Activated CD4-positive, alpha-beta memory T cell treated with anti-CD3 and anti-CD28 coated beads, Interleukin-2, amount 10 ng/mL, durations not matched to agents 7 days and 5 days (primary cell): ENCODE measurements at regions of chr19 and their contacts with region 1.

Region 1: DNA sequence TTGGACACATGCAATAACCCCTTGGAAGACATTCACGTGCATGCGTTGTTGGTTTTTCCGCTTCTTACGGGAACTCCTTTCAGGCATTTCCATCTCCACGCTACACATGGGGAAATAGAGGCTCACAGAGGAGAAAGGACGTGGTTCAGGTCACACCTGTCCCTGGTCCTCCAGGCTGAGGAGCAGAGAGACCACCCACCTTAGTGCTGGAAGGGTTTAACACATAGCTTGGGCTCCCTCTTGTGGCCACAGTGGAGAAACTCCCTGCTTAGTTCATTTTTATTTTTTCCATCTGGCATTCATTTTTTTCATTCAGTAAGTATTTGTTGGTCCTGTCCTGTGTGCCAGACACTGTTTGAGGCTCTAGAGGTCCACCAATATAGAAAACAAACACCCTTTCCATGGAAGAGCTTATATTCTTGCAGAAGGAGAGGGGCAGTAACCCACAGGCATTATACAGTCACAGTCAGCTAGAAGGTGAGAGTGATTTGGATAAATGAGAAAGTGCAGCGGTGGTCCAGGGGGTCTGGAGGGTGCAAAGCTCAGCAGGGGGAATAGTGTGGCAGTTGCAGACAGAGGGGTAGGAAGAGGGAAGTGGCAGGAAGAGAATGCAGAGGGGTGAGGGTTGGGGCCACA is 24.2 kb upstream of the TTYH1 start:
- DNase-seq: peak; percentile 65
- H3K4me3 Mint-ChIP-seq: no peak overlapping the region
- H3K27ac Mint-ChIP-seq: no peak overlapping the region
- H3K4me1 Mint-ChIP-seq: peaks cover 38% of the 10 kb centered on the region
- H3K27me3 Mint-ChIP-seq: peaks cover 16% of the 10 kb centered on the region

Region 2: DNA sequence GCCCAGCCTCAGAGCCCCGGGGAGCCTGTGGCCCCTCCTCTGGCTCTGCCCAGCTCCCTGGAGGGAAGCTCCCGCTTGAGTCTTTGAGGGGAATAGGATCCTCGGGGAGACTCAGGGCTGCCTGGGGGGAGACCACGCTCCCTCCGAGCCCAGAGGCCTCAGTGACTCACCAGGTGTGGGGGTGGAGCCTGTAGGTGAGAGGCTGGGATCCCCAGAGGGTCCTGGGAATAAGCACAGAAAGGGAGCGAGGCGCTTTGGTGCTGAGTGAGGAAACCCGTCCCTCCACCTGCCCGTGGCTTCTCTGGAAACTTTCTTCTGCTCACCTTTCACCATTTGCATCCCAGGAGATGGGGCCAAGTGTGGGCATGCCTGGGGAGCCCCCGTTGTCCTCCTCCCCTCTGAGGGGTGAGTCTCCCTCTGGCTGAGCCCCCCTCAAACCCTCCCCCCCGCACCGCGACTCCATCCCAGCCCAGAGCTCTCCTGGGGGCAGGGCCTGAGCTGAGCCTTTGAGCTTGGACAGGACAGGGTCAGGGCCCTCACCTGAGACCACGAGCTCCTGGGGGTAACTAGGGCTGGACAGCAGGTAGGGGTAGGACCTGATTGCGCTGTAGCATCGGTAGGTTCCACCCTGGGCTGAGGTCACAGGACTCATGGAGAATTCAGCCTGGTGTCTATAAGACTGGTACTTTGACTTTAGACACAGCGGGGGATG is 136.7 kb before region 1 on chr19:
- CTCF ChIA-PET with region 1: no interaction called
- POLR2A ChIA-PET with region 1: no interaction called
- DNase-seq: no peak
- H3K4me3 Mint-ChIP-seq: no peak overlapping the region
- H3K27ac Mint-ChIP-seq: no peak overlapping the region
- H3K4me1 Mint-ChIP-seq: no peaks in the 10 kb centered on the region
- H3K27me3 Mint-ChIP-seq: peaks cover 20% of the 10 kb centered on the region

Region 3: GRCh38 chr19:54266133-54266532 is 124.9 kb before region 1 on chr19:
- CTCF ChIA-PET with region 1: interaction called, 11 read pairs
- POLR2A ChIA-PET with region 1: interaction called, 5 read pairs
- DNase-seq: peak; percentile 77
- H3K4me3 Mint-ChIP-seq: no peak overlapping the region
- H3K27ac Mint-ChIP-seq: no peak overlapping the region
- H3K4me1 Mint-ChIP-seq: no peaks in the 10 kb centered on the region
- H3K27me3 Mint-ChIP-seq: peaks cover 36% of the 10 kb centered on the region

Region 4: GRCh38 chr19:54325194-54325621 is 65.9 kb before region 1 on chr19:
- CTCF ChIA-PET with region 1: interaction called, 153 read pairs
- POLR2A ChIA-PET with region 1: interaction called, 3 read pairs
- DNase-seq: peak; percentile 42
- H3K4me3 Mint-ChIP-seq: no peak overlapping the region
- H3K27ac Mint-ChIP-seq: no peak overlapping the region
- H3K4me1 Mint-ChIP-seq: peaks cover 8% of the 10 kb centered on the region
- H3K27me3 Mint-ChIP-seq: peaks cover 30% of the 10 kb centered on the region

Region 5: DNA sequence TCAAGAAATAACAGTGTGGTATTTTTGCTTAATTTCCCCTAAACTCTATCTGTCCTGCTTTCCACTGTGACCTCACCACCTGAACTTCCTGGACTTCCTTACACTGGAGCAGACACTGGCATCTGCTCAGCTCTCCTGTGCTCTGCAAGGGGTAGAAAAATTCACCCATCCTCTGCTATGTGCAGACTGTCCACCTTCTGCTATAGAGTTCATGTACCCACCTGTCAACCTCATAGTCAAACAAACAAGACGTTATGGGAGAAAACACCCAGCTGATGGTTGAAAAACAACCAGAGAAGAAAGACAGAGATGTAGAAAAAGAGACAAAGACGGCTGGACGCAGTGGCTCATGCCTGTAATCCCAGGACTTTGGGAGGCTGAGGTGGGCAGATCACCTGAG is 38.5 kb before region 1 on chr19:
- CTCF ChIA-PET with region 1: interaction called, 62 read pairs
- POLR2A ChIA-PET with region 1: interaction called, 11 read pairs
- DNase-seq: no peak
- H3K4me3 Mint-ChIP-seq: no peak overlapping the region
- H3K27ac Mint-ChIP-seq: no peak overlapping the region
- H3K4me1 Mint-ChIP-seq: peaks cover 3% of the 10 kb centered on the region
- H3K27me3 Mint-ChIP-seq: peaks cover 28% of the 10 kb centered on the region

Region 6: GRCh38 chr19:54364775-54365257 is 26.2 kb before region 1 on chr19 and contains the start of gene LAIR1:
- CTCF ChIA-PET with region 1: interaction called, 11 read pairs
- POLR2A ChIA-PET with region 1: interaction called, 38 read pairs
- DNase-seq: peak; percentile 66
- H3K4me3 Mint-ChIP-seq: peak within 1 kb of the TSS; percentile 87
- H3K27ac Mint-ChIP-seq: peak within 1 kb of the TSS; percentile 82
- H3K4me1 Mint-ChIP-seq: peaks cover 72% of the 10 kb centered on the region
- H3K27me3 Mint-ChIP-seq: peaks cover 18% of the 10 kb centered on the region
- total RNA-seq, gene LAIR1: 56.6 to 59.0 TPM

Region 7: DNA sequence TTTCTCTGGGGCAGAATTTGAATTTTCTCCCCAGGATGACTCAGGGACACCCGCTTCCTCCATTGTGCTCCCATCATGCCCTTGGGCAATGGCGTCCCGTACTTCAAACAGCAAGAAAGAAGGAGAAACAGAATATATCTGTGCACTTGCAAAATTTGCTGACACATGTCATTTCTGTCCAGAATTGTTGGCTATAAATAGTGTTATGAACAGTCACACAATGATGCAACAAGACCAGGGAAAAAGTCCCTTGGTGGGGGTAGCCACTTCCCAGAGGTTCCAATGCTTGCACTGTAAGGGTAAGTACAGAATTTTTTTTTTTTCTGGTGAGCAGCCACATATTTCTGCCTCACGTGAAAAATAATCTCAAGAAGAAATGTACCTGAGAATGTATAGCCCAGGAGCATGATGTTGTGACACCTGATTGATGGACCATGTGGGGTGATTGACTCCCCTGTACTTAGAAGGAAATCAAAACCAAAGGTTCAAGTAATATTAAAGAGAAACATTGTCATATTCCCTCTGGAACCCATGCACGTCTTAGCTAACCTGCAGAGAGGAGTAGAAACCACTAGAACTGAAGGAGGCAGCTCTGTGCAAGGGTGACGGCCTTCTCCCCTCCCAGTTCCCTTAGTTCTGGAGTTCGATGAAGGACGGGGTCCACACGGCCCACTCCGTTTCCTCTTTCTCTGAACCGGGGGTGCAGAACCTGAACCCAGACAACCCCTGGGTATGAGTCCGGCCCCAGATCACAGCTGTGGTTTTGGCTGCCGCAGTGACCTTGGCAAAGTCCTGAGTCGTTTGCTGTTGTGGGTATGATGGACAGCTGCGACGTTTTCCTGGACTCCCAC is 17.1 kb before region 1 on chr19:
- CTCF ChIA-PET with region 1: interaction called, 14 read pairs
- POLR2A ChIA-PET with region 1: interaction called, 23 read pairs
- DNase-seq: no peak
- H3K4me3 Mint-ChIP-seq: peak overlapping the region; percentile 74
- H3K27ac Mint-ChIP-seq: peak overlapping the region; percentile 21
- H3K4me1 Mint-ChIP-seq: peaks cover 84% of the 10 kb centered on the region
- H3K27me3 Mint-ChIP-seq: peaks cover 33% of the 10 kb centered on the region

Region 8: DNA sequence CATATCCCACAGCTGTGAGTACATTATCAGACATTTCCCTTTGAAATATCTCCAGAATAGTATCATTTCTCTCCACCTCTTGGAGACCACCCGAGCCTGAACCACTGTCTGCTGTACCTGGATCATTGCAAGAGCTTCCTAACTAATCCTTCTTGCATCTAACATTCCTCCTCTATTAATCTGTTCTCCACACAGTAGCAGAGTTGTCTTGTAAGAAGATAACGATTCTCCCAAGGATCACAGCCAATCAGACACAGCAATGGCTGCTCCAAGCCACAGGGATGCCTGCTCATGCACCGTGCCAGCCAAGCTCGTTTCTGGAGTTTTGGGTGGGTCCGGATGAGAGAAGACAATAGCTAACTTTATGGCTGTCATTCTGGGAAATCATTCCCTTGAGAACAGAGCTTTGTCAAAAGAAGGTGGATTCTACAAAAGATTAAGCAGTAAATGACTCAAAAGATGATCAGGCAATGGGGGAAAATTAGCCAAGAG is 11.8 kb before region 1 on chr19:
- CTCF ChIA-PET with region 1: interaction called, 14 read pairs
- POLR2A ChIA-PET with region 1: interaction called, 23 read pairs
- DNase-seq: no peak
- H3K4me3 Mint-ChIP-seq: no peak overlapping the region
- H3K27ac Mint-ChIP-seq: no peak overlapping the region
- H3K4me1 Mint-ChIP-seq: peaks cover 65% of the 10 kb centered on the region
- H3K27me3 Mint-ChIP-seq: peaks cover 41% of the 10 kb centered on the region

Region 9: DNA sequence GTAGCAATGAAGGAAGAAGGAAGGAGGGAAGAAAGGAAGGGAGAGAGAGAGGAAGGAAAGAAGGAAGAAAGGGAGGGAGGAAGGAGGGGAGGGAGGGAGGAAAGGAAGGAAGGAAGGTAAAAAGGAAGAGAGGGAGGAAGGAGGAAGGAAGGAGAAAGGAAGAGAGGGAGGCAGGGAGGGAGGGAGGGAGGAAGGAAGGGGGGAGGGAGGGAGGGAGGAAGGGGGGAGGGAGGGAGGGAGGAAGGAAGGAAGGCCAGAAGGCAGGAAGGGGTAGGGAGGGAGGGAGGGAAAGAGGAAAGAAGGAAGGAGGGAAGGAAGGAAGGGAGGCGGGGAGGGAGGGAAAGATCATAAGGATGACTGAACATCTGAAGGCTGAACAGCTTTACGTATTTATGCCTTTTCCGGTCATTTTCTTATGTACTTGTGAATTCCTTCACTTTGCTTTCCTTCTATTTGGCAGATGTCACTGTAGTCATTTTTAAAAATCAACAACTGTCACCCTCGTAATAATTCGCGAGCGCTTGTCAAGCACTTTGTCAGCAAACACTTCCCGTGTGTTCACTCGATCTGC is 17.5 kb after region 1 on chr19:
- CTCF ChIA-PET with region 1: no interaction called
- POLR2A ChIA-PET with region 1: no interaction called
- DNase-seq: no peak
- H3K4me3 Mint-ChIP-seq: no peak overlapping the region
- H3K27ac Mint-ChIP-seq: peak overlapping the region; percentile 40
- H3K4me1 Mint-ChIP-seq: no peaks in the 10 kb centered on the region
- H3K27me3 Mint-ChIP-seq: peaks cover 8% of the 10 kb centered on the region